ENCODE measurements at regions of chr18 and their contacts with region 1.

Region 1: GRCh38 chr18:39761273-39761672 is 2193.8 kb upstream of the PIK3C3 start:
- DNase-seq: no peak
- ATAC-seq: no peak
- H3K4me3 ChIP-seq: no peak overlapping the region
- H3K27ac ChIP-seq: no peak overlapping the region
- H3K4me1 ChIP-seq: no peaks in the 10 kb centered on the region
- H3K27me3 ChIP-seq: no peaks in the 10 kb centered on the region
- CTCF ChIP-seq: no peak

Region 2: GRCh38 chr18:38186491-38186890 is 1574.8 kb before region 1 on chr18:
- intact Hi-C with region 1: loop called in 1 of 10 experiments (anchors 10 kb)
- DNase-seq: no peak
- ATAC-seq: no peak
- H3K4me3 ChIP-seq: no peak overlapping the region
- H3K27ac ChIP-seq: no peak overlapping the region
- H3K4me1 ChIP-seq: no peaks in the 10 kb centered on the region
- H3K27me3 ChIP-seq: no peaks in the 10 kb centered on the region
- CTCF ChIP-seq: no peak

Region 3: GRCh38 chr18:39825485-39826150 is 64.3 kb after region 1 on chr18:
- intact Hi-C with region 1: no loop called
- DNase-seq: no peak
- ATAC-seq: no peak
- H3K4me3 ChIP-seq: no peak overlapping the region
- H3K27ac ChIP-seq: no peak overlapping the region
- H3K4me1 ChIP-seq: no peaks in the 10 kb centered on the region
- H3K27me3 ChIP-seq: no peaks in the 10 kb centered on the region
- CTCF ChIP-seq: no peak

Measured in heart right ventricle (tissue), 16 donors.